Posterior vena cava (tissue), 2 donors: ENCODE measurements at regions of chr11 and their contacts with region 1.

Region 1: DNA sequence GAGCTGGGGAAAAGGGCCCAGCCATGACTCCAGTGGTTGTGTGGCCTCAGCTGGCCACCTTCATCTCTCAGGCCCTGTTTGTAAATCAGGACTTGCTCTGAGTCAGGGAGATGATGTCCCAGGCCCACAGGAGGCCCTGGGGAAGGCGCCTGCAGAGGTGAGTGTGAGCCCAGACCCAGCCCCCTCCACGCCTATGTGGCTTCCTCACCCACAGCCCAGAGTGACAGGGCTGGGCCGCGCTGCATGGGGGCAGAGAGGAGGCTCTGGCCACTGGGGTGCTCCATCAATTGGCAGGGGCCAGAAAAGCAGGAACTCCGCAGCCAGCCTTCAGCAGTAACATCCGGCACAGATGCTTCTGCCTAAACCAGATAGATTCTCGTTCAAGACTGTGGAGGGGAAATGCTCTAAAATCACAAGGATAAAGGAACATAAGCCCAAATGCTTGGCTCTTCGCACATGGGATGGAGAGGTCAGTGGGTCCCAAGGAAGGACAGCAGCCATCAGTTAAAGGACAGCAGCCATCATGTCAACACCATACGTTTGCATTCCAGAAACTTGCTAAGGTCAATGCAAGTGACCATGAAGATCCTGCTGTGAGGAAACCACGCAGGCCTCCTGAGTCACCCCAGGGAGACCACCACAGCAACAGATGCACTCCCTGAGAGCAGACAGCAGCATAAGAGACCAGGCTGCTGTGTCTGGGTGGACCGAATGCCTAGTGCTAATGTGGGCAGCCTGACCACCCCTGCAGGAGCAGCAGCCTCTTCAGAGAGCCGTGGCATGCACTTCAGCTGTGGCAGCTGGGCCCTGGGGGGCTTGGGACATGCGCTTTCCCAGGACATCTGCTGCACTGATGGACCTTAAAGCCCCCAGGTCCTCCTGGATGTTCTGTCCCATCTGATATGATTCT is 28.3 kb downstream of the OSBPL5 start:
- DNase-seq: peak; percentile 80

Region 2: DNA sequence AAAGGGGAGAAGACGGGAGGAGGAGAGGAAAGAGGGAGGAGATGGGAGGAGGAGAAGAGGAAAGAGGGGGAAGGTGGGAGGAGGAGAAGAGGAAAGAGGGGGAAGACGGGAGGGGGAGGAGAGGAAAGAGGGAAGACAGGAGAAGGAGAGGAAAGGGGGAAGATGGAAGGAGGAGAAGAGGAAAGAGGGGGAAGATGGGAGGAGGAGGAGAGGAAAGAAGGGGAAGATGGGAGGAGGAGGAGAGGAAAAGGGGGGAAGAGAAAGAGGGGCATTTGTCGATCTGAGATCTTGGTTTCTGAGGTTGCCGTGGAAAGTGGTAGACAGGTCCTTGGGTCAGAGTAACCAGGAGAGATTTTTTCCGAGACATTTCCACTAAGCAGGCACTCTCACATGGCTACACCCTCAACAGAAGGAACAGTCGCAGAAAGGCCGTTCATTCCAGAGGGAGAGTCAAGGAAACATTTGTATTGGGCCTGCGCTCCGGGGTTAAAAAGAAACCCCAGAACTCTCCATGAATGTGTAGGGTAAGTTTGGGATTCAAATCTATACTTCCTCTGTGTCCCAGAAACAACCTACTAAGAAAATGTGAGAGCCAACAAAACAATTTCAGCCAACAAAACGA is 39.8 kb before region 1 on chr11:
- intact Hi-C with region 1: loop called in 1 of 2 experiments (anchors 1 kb)
- DNase-seq: no peak

Region 3: DNA sequence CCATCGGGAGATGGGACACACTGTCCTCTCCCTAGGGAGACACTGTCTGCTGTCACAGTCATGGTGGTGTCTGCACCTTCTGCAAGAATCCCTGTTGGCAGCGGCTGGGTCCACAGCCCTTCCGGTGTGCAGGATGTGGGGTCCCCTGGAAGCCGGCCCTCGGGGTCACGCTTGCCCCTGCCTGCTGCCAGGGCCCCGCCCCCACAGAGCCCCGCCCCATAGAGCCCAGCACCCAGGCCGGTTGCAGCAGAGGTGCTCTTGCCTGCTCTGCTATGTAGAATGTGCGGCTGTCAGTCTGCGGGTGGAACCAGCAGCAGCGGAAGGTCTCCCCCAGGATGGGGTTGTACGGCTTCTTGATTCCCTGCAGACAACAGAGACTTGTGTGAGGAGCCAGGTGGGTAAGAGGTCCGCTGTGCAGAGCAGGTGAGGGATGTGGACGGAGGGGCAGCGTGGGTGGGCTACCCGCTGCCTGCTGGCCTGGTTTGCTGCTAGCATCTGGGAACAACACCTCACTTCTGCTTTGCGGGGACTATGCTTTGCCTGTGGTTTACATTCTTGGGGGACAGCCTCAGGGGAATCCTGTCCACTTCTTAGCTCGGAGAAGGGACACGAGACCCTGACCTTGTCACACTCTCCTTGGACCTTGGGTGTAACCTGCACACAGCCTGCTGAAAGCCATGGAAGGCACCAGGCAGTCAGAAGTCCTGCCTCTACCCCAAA is 34.7 kb before region 1 on chr11:
- intact Hi-C with region 1: loop called in 1 of 2 experiments (anchors 1 kb)
- DNase-seq: peak; percentile 64